Sigmoid colon (tissue), 7 donors: ENCODE measurements at regions of chr10 and their contacts with region 1.

Region 1: DNA sequence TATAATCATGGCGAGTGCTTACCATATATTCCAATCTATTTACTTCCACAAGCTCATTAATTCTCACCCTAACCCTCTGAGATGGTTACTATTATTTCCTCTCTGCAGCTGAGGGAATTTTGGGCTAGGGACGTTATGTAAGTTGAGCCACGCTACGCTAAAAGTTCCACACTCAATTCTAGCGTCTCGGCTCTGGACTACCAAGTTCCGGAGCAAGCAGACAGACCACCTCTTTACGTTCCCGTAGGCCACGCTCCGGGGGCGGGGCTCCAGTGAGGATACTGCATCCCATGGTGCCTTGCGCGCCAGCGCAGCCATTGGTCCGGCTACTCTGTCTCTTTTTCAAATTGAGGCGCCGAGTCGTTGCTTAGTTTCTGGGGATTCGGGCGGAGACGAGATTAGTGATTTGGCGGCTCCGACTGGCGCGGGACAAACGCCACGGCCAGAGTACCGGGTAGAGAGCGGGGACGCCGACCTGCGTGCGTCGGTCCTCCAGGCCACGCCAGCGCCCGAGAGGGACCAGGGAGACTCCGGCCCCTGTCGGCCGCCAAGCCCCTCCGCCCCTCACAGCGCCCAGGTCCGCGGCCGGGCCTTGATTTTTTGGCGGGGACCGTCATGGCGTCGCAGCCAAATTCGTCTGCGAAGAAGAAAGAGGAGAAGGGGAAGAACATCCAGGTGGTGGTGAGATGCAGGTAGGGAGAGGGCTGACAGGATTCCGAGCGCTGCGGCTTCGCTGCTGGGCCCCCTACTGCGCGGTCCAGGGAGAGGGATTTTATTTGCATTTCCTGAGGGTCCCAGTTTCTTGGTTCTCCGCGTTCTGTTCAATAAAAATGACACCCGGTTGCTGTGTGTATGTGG is at the start of gene KIF11:
- DNase-seq: peak; percentile 98
- H3K4me3 ChIP-seq: peak within 1 kb of the TSS; percentile 44 to 75 (median 60)
- H3K27ac ChIP-seq: peak within 1 kb of the TSS; percentile 87 to 97 (median 96)
- H3K4me1 ChIP-seq: peaks cover 0 to 23% (median 11%) of the 10 kb centered on the region in 4 donors
- H3K27me3 ChIP-seq: no peaks in the 10 kb centered on the region
- CTCF ChIP-seq: no peak
- EP300 ChIP-seq: peak in 1 of 4 donors; percentile 36
- POLR2A ChIP-seq: peak; percentile 87 to 91
- total RNA-seq, gene KIF11: 0.16 to 0.95 (median 0.77) TPM

Region 2: DNA sequence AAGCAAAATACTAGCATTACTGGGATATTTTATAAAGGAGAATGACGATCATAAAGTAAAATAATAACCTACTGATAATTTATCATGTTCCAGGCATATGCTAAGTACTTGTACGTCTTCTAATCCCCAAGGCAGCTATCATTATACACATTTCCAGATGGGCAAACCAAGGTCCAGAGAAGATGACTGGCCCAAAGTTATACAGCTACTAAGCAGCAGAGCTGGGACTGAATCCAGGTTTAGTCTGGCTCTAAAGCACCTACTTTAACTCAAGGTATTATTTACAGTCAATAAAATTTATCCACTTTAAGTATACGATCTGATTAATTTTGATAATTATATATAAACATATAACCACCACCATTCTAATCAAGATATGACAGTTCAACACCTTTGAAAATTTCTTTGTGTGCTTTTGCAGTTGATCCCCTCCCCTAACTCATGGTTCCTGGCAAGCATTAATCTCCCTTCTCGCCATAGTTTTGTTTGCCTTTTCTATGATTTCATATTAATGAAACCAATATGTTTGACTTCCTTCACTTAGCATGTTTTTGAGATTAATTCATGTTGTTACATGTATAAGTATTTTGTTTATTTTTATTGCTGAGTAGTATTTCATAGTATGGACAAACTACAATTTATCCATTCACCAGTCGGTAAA is 428.8 kb before region 1 on chr10:
- intact Hi-C with region 1: no loop called
- DNase-seq: no peak
- H3K4me3 ChIP-seq: no peak overlapping the region
- H3K27ac ChIP-seq: no peak overlapping the region
- H3K4me1 ChIP-seq: no peaks in the 10 kb centered on the region
- H3K27me3 ChIP-seq: no peaks in the 10 kb centered on the region
- CTCF ChIP-seq: no peak
- EP300 ChIP-seq: no peak
- POLR2A ChIP-seq: no peak

Region 3: DNA sequence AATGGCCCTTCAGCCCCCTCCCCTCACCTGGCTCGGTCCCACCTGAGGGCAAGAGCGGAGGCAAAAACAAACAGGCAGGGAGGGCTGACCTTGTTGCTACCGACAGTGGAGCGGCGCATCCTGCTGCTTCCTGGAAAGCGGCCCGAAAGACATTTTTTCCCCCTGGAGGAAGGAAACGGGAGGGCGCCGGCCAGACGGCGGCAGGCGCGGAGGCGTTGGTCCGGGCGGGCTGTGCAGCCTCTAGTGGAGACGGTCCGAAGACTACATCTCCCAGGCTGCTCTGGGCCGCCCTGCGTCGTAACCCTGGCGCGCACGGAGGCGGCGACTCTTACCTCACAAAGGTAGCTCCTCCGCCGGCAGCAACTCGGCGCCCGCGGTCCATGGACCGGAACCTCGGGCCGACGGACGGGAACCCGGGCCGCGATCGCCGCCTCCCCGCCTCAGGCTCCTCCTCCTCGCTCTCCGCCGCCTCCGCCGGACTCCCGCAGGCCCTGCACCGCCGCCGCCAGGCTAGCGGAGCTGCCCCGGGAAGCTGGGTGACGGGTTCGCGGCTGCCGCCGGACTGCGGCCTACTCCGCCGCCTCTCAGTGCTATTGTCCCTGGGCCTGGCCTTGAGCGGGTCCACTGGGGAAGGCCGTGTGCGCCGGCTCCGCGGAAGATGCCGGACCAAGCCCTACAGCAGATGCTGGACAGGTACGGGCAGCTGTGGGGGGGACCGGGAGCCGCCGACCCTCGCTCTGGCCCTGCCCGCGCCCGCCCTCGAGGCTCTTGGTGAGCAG is 302.0 kb before region 1 on chr10 and contains the starts of genes CPEB3 and MARCHF5:
- intact Hi-C with region 1: loop called (anchors 5 kb)
- DNase-seq: peak; percentile 98
- H3K4me3 ChIP-seq: peak within 1 kb of the TSS; percentile 58 to 99 (median 86)
- H3K27ac ChIP-seq: peak within 1 kb of the TSS; percentile 82 to 99 (median 94)
- H3K4me1 ChIP-seq: peaks cover 0 to 17% (median 15%) of the 10 kb centered on the region in 4 donors
- H3K27me3 ChIP-seq: no peaks in the 10 kb centered on the region
- CTCF ChIP-seq: peak; percentile 77 to 95 (median 86)
- EP300 ChIP-seq: no peak
- POLR2A ChIP-seq: peak; percentile 66 to 72
- total RNA-seq, gene CPEB3: 6.6 to 7.7 (median 7.3) TPM
- total RNA-seq, gene MARCHF5: 9.5 to 23.5 (median 16.7) TPM

Region 4: GRCh38 chr10:92573798-92574547 is 19.0 kb before region 1 on chr10 and contains the start of gene IDE:
- intact Hi-C with region 1: loop called (anchors 1 kb)
- DNase-seq: peak; percentile 93
- H3K4me3 ChIP-seq: peak within 1 kb of the TSS; percentile 82 to 97 (median 89)
- H3K27ac ChIP-seq: peak within 1 kb of the TSS; percentile 95 to 98 (median 98)
- H3K4me1 ChIP-seq: peaks cover 2 to 40% (median 23%) of the 10 kb centered on the region in 4 donors
- H3K27me3 ChIP-seq: no peaks in the 10 kb centered on the region
- CTCF ChIP-seq: peak; percentile 68 to 86 (median 76)
- EP300 ChIP-seq: no peak
- POLR2A ChIP-seq: peak; percentile 28 to 29
- total RNA-seq, gene IDE: 23.3 to 32.9 (median 28.8) TPM

Region 5: GRCh38 chr10:92757066-92757710 is 164.2 kb after region 1 on chr10:
- intact Hi-C with region 1: loop called (anchors 2 kb)
- DNase-seq: peak; percentile 97
- H3K4me3 ChIP-seq: peak overlapping the region in 2 of 4 donors; percentile 12 to 26
- H3K27ac ChIP-seq: peak overlapping the region; percentile 89 to 90 (median 90)
- H3K4me1 ChIP-seq: peaks cover 0 to 48% (median 42%) of the 10 kb centered on the region in 4 donors
- H3K27me3 ChIP-seq: no peaks in the 10 kb centered on the region
- CTCF ChIP-seq: peak in 1 of 4 experiments; percentile 21
- EP300 ChIP-seq: no peak
- POLR2A ChIP-seq: no peak

Region 6: GRCh38 chr10:92880233-92880861 is 287.4 kb after region 1 on chr10:
- intact Hi-C with region 1: loop called (anchors 5 kb)
- DNase-seq: no peak
- H3K4me3 ChIP-seq: no peak overlapping the region
- H3K27ac ChIP-seq: no peak overlapping the region
- H3K4me1 ChIP-seq: peaks cover 0 to 11% (median 0%) of the 10 kb centered on the region in 4 donors
- H3K27me3 ChIP-seq: no peaks in the 10 kb centered on the region
- CTCF ChIP-seq: peak in 2 of 4 experiments; percentile 11 to 44
- EP300 ChIP-seq: no peak
- POLR2A ChIP-seq: no peak